ENCODE measurements at regions of chr7 and their contacts with region 1.

Region 1: DNA sequence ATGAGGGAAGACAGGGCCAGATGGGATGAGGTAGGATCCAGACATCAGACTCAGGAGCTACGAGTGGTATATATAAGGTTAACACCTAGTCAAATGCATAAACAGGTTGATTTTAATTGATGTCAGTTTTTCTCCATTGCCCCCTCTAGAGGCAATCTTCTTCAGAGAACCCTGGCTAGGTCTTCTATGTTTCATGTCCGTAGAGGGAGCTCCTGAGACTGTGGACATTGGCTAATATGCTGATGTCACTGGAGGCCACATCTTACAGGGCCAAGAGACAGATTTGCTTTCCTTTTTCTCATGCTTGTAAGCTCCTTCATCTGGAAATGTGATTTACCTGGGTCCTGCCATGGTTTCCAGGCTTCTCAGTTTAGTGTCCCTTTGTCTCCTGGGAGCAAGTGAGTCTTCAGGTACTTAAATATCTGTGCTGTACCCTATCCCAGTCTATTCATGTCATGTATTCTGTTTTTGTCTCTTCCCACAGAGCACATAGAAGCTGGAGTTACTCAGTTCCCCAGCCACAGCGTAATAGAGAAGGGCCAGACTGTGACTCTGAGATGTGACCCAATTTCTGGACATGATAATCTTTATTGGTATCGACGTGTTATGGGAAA is 161.6 kb upstream of the PRSS1 start:
- DNase-seq: no peak
- ATAC-seq: no peak
- H3K4me3 ChIP-seq: no peak overlapping the region
- H3K27ac ChIP-seq: no peak overlapping the region
- H3K4me1 ChIP-seq: no peaks in the 10 kb centered on the region
- H3K27me3 ChIP-seq: no peaks in the 10 kb centered on the region

Region 2: GRCh38 chr7:142111499-142111898 is 476.2 kb before region 1 on chr7 and contains the start of gene MGAM2:
- intact Hi-C with region 1: no loop called
- DNase-seq: no peak
- ATAC-seq: no peak
- H3K4me3 ChIP-seq: no peak within 1 kb of the TSS
- H3K27ac ChIP-seq: no peak within 1 kb of the TSS
- H3K4me1 ChIP-seq: no peaks in the 10 kb centered on the region
- H3K27me3 ChIP-seq: no peaks in the 10 kb centered on the region
- total RNA-seq, gene MGAM2: 0.12 to 0.65 TPM

Region 3: GRCh38 chr7:142535123-142535779 is 52.4 kb before region 1 on chr7:
- intact Hi-C with region 1: loop called in 1 of 2 experiments (anchors 5 kb)
- DNase-seq: peak in 1 of 2 donors; percentile 71
- ATAC-seq: no peak
- H3K4me3 ChIP-seq: no peak overlapping the region
- H3K27ac ChIP-seq: no peak overlapping the region
- H3K4me1 ChIP-seq: no peaks in the 10 kb centered on the region
- H3K27me3 ChIP-seq: no peaks in the 10 kb centered on the region